Thyroid gland (tissue), 4 donors: ENCODE measurements at regions of chr1 and their contacts with region 1.

Region 1: DNA sequence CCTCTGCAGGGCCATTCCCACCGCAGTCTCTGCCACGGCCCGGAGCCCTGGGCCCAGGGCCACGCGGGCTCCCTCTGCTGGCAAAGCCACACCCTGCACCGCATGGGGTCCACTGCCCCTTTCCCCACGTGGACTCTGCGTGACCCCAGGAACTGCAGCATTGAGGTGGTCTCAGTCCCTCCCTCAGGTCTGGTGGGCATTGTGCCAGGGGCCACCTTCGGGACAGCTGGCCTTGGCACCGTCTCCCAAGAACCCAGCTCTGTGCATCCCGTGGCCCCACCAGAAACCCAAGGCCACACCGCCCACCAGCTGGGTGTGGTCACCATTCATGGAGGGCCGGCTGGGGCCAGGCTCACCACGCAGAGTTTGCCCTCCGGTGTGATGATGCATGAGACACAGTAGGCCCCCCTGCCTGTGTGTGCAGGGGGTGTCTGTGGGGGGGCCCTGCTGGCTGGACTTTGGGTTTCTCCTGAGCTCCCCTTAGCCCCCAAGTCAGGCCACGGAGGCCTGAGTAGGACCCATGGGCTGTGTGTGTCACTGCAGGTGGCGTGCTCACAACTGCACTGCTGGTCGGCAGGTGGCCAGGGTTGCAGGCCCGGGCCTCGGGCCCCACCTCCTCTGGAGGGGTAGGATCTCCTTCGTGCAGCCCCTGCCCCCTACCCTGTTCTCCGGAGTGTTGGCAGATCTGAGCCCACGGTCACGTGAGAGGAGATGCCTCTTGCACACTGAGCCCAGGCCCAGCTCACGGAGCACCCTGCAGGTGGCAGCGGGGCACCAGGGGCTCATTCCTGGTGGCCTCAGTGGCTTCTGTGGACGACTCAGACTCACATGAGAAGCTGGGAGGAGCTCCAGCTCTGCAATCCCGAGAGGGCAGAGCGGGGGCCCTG is 5.8 kb downstream of the VWA1 start:
- DNase-seq: peak; percentile 40 to 42
- H3K4me3 ChIP-seq: no peak overlapping the region
- H3K27ac ChIP-seq: no peak overlapping the region
- H3K4me1 ChIP-seq: peaks cover 0 to 12% of the 10 kb centered on the region in 2 donors
- H3K27me3 ChIP-seq: no peaks in the 10 kb centered on the region
- CTCF ChIP-seq: peak; percentile 54 to 86 (median 73)
- POLR2A ChIP-seq: no peak

Region 2: GRCh38 chr1:1307908-1308755 is 133.1 kb before region 1 on chr1 and contains the starts of genes ACAP3 and PUSL1:
- intact Hi-C with region 1: no loop called
- DNase-seq: peak; percentile 86 to 87
- H3K4me3 ChIP-seq: peak within 1 kb of the TSS; percentile 70 to 91 (median 85)
- H3K27ac ChIP-seq: peak within 1 kb of the TSS; percentile 49 to 93 (median 86)
- H3K4me1 ChIP-seq: peaks cover 32 to 39% of the 10 kb centered on the region in 2 donors
- H3K27me3 ChIP-seq: no peaks in the 10 kb centered on the region
- CTCF ChIP-seq: no peak
- POLR2A ChIP-seq: peak in 1 of 2 donors; percentile 42
- total RNA-seq, gene ACAP3: 31.6 to 51.2 (median 42.1) TPM
- total RNA-seq, gene PUSL1: 24.0 to 41.4 (median 28.0) TPM

Region 3: GRCh38 chr1:1406817-1407635 is 34.2 kb before region 1 on chr1 and contains the start of gene MRPL20:
- intact Hi-C with region 1: loop called (anchors 5 kb)
- DNase-seq: peak; percentile 94 to 95
- H3K4me3 ChIP-seq: peak within 1 kb of the TSS; percentile 92 to 98 (median 96)
- H3K27ac ChIP-seq: peak within 1 kb of the TSS; percentile 68 to 75 (median 75)
- H3K4me1 ChIP-seq: peaks cover 22 to 29% of the 10 kb centered on the region in 2 donors
- H3K27me3 ChIP-seq: no peaks in the 10 kb centered on the region
- CTCF ChIP-seq: peak in 1 of 6 experiments; percentile 3
- POLR2A ChIP-seq: peak in 1 of 2 donors; percentile 84
- total RNA-seq, gene MRPL20: 123 to 199 (median 160) TPM